ENCODE measurements at regions of chr1 and their contacts with region 1.

Region 1: DNA sequence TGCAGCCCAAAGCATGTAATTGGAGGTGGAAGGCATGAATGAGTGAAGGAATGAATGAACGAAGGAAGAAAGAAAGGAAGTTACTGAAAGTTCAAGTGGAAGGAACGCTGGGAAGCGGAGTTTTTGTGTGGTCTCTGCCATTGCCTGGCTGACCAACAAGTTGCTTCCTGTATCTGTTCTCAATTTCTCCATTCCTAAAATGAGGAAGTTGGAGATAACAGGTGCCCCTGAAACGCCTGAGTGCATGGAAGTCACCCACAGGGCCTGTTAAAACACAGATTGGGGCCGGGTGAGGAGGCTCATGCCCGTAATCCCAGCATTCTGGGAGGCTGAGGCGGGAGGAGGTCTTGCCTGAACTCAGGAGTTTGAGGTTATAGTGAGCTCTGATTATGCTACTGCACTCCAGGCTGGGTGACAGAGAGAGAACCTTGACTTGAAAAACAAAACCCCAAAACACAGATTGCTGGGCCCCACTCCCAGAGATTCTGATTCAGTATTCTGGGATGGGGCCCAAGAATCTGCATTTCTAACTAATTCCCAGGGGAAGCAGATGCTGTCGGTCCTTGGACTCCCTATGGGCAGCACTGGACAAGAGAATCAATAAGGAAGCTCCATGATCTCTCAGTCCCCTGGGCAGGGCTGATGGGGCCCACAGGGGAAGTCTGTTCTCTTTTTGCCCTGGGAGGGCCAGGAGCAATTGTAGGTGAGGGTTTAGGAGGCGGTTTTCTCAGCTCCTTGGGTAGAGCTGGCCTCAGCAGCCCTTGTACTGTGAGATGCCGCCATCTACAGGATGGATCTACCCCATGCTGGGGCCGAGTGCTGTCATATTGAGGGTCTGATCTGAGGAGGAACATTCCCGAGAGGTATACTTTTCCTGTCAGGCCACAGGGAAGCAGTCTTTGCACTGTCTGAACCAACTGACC is 3.3 kb upstream of the CNR2 start:
- DNase-seq: peak; percentile 76 to 78
- H3K4me3 ChIP-seq: no peak overlapping the region
- H3K27ac ChIP-seq: no peak overlapping the region
- H3K4me1 ChIP-seq: peaks cover 13 to 29% of the 10 kb centered on the region in 2 donors
- H3K27me3 ChIP-seq: no peaks in the 10 kb centered on the region
- CTCF ChIP-seq: peak in 5 of 6 experiments; percentile 35 to 79 (median 70)
- POLR2A ChIP-seq: no peak

Region 2: DNA sequence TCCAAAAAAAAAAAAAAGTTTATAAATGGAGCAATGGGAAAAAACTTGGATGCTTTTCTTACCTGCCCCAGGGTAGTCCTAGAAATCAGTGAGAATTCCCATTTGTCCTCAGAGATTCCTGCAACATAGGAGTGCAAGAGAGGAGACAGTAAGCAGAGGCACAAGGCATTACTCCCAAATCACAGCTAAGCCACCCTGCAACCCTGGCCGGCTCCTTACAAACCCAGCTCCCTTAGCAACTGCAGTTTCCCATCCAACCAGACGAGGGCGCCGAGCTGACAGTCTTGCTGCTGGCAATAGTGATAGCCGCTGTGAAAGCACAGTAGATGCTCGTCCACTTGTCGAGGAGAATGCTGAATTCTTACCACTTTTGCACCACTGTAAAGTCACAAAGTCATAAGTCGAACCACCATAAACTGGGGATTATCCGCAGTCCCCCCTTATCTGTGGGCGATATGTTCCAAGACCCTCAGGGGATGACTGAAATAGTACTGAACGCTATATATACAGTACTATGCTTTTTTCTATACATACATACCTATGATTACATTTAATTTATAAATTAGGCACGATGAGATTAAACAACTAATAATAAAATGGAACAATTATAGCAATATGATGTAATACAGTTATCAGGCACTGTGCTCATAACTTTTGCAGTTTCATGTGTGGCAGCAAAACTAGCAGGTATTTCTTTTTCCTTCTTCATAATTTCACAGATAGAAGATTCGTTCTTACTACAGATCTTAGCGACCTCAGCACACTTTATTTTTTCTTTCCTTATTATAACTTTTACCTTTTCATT is 144.2 kb before region 1 on chr1:
- intact Hi-C with region 1: loop called (anchors 5 kb)
- DNase-seq: peak; percentile 88 to 91
- H3K4me3 ChIP-seq: no peak overlapping the region
- H3K27ac ChIP-seq: no peak overlapping the region
- H3K4me1 ChIP-seq: peaks cover 12 to 25% of the 10 kb centered on the region in 2 donors
- H3K27me3 ChIP-seq: no peaks in the 10 kb centered on the region
- CTCF ChIP-seq: peak; percentile 82 to 96 (median 84)
- POLR2A ChIP-seq: no peak

Region 3: DNA sequence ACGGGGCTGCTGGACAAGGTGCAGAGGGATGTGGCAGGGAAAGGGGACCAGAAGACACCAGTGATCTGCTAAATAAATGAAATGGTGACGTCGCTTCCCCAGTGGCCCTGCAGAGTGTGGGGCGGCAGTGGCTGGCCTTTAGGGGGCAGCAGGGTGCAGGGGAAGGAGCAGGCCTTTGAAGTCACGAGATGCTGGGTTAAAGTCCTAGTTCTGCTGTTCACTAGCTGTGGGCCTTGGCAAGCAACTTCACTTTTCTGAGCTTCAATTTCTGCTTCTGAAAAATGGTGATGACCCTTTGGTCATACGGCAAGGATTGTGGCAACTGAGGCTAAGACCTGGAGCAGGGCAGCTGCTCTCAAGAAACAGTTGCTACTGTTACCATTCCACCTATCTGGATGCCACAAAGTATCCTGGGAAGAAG is 106.7 kb before region 1 on chr1:
- intact Hi-C with region 1: loop called (anchors 10 kb)
- DNase-seq: peak; percentile 57 to 62
- H3K4me3 ChIP-seq: no peak overlapping the region
- H3K27ac ChIP-seq: no peak overlapping the region
- H3K4me1 ChIP-seq: no peaks in the 10 kb centered on the region
- H3K27me3 ChIP-seq: no peaks in the 10 kb centered on the region
- CTCF ChIP-seq: peak in 5 of 6 experiments; percentile 36 to 58 (median 47)
- POLR2A ChIP-seq: no peak